ENCODE measurements at regions of chr10 and their contacts with region 1.

Region 1: GRCh38 chr10:69408318-69409175 is 8.2 kb downstream of the TACR2 start:
- DNase-seq: peak; percentile 77 to 96
- H3K4me3 ChIP-seq: peak overlapping the region; percentile 39 to 62
- H3K27ac ChIP-seq: peak overlapping the region; percentile 91 to 95
- H3K4me1 ChIP-seq: peaks cover 5 to 24% of the 10 kb centered on the region in 2 donors
- H3K27me3 ChIP-seq: no peaks in the 10 kb centered on the region
- CTCF ChIP-seq: peak; percentile 63 to 84 (median 81)

Region 2: DNA sequence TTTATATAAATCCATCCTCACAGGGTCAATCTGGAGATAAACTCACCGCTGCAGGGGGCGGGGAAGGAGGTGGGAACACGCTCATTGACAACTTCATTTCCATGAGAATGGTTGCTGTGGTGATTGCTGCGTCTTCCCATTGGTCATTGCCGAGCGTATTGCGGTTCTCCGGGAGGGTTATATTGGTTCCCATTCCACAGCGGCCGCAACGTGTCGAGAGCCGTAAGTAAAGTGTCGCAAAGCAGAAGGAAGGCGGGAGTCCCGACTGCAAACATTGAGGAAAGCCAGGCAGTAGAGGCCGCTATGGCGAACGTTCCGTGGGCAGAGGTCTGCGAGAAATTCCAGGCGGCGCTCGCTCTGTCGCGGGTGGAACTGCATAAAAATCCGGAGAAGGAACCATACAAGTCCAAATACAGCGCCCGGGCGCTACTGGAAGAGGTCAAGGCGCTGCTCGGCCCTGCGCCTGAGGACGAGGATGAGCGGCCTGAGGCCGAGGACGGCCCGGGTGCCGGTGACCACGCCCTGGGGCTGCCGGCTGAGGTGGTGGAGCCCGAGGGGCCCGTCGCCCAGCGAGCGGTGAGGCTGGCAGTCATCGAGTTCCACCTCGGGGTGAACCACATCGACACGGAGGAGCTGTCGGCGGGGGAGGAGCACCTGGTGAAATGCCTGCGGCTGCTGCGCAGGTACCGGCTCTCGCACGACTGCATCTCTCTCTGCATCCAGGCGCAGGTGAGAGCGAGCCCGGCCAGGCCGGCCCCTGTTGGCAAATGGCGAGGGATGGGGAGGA is 419.8 kb before region 1 on chr10 and contains the start of gene KIFBP:
- intact Hi-C with region 1: loop called (anchors 5 kb)
- DNase-seq: peak; percentile 89 to 98
- H3K4me3 ChIP-seq: peak within 1 kb of the TSS; percentile 71 to 85
- H3K27ac ChIP-seq: peak within 1 kb of the TSS; percentile 85 to 88
- H3K4me1 ChIP-seq: peaks cover 5 to 36% of the 10 kb centered on the region in 2 donors
- H3K27me3 ChIP-seq: no peaks in the 10 kb centered on the region
- CTCF ChIP-seq: peak; percentile 28 to 61 (median 56)
- total RNA-seq, gene KIFBP: 25.3 TPM

Region 3: DNA sequence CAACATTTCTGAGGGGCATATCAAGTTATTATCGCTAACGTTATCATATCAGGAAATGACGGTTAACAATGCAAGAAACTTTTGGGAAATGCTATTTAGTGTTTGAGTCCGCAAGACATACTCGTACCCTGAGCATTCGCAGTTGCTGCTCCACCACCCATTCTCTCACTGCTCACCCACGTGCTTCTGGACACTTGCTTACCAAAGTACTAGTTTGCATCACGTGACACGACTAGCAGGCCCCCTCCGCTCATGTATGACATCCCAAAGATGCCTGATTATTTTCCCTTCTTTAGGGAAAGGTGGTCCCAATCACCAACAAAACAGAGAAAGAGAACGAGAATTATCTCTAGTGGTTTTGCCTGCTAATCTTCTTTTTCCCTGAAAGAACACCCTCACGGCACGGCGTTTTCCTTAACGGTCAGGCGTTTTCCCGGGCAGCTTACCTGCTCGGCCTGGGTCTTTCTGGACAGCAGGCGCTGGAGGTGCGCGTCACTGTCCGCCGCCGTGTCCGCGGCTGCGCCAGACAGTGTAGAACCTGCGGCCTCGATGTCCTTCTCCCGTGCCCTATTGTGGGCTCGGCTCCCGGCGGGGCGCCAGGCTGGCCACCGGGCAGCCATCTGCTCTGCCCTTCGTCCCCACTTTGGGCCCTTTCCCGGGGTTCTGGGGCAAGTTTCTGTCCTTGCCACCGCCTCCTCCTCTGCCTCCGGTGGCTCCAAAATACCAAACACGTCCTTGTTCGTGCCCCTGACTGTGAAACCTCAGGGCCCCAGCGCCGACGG is 228.6 kb before region 1 on chr10 and contains the start of gene SUPV3L1:
- intact Hi-C with region 1: loop called (anchors 5 kb)
- DNase-seq: peak; percentile 80 to 96
- H3K4me3 ChIP-seq: peak within 1 kb of the TSS; percentile 81 to 95
- H3K27ac ChIP-seq: peak within 1 kb of the TSS; percentile 89 to 90
- H3K4me1 ChIP-seq: peaks cover 4 to 17% of the 10 kb centered on the region in 2 donors
- H3K27me3 ChIP-seq: no peaks in the 10 kb centered on the region
- CTCF ChIP-seq: no peak
- total RNA-seq, gene SUPV3L1: 4.6 TPM

Region 4: DNA sequence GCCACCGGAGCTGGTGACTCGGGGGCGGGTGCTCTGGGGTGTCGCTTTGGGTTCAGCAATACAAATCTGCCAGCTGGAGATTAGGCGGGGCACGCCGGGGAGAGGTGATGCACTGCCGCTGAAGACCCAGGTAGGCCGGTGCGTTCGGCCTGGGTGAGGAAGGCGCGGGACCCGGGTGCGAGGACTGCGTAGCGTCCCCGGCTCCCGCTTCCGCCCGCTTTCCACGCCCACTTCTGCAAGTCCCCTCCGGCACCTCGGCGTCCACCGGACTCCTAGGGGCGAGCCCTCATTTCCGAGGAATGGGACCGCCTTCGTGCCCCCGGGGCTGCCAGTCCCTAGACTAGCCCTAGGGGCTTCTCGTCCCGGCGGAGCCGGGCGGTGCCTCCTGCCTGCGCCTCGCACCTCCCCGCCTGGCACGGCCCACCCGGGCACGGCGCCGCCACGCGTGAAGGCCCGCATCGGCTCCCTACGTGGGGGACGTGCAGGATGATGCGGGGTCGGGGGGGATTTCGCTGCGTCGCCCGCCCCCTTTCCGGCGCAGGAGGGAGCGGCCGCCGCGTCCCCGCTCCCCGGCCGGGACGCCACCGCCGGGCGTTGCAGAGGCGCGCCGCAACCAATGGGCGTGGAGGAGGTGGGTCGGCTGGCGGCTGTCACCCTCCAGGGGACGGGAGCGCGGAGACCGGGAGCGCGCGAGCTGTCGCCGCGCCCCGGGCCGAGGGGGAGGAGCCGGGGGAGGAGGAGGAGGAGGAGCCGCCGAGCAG is 90.3 kb before region 1 on chr10:
- intact Hi-C with region 1: loop called (anchors 2 kb)
- DNase-seq: peak; percentile 62 to 94
- H3K4me3 ChIP-seq: peak overlapping the region; percentile 90 to 92
- H3K27ac ChIP-seq: peak overlapping the region; percentile 91 to 99
- H3K4me1 ChIP-seq: peaks cover 11 to 28% of the 10 kb centered on the region in 2 donors
- H3K27me3 ChIP-seq: no peaks in the 10 kb centered on the region
- CTCF ChIP-seq: no peak

Region 5: GRCh38 chr10:69392481-69393000 is 16.0 kb before region 1 on chr10:
- intact Hi-C with region 1: loop called (anchors 2 kb)
- DNase-seq: peak; percentile 64 to 93
- H3K4me3 ChIP-seq: no peak overlapping the region
- H3K27ac ChIP-seq: peak overlapping the region; percentile 30 to 52
- H3K4me1 ChIP-seq: peaks cover 0 to 18% of the 10 kb centered on the region in 2 donors
- H3K27me3 ChIP-seq: no peaks in the 10 kb centered on the region
- CTCF ChIP-seq: peak; percentile 93 to 97 (median 96)

Region 6: GRCh38 chr10:69629897-69630650 is 221.5 kb after region 1 on chr10 and contains the start of gene FAM241B:
- intact Hi-C with region 1: loop called (anchors 5 kb)
- DNase-seq: peak in 1 of 2 donors; percentile 83
- H3K4me3 ChIP-seq: peak within 1 kb of the TSS; percentile 65 to 88
- H3K27ac ChIP-seq: peak within 1 kb of the TSS; percentile 63 to 67
- H3K4me1 ChIP-seq: peaks cover 3 to 9% of the 10 kb centered on the region in 2 donors
- H3K27me3 ChIP-seq: no peaks in the 10 kb centered on the region
- CTCF ChIP-seq: peak; percentile 87 to 100 (median 100)
- total RNA-seq, gene FAM241B: not detected

Measured in ascending aorta (tissue), 2 donors.